ENCODE measurements at regions of chr12 and their contacts with region 1.

Region 1: GRCh38 chr12:51823875-51824565 is 24.5 kb downstream of the FIGNL2 start:
- DNase-seq: no peak
- H3K4me3 Mint-ChIP-seq: no peak overlapping the region
- H3K27ac Mint-ChIP-seq: no peak overlapping the region
- H3K4me1 Mint-ChIP-seq: peaks cover 22% of the 10 kb centered on the region
- H3K27me3 Mint-ChIP-seq: peaks cover 33% of the 10 kb centered on the region

Region 2: DNA sequence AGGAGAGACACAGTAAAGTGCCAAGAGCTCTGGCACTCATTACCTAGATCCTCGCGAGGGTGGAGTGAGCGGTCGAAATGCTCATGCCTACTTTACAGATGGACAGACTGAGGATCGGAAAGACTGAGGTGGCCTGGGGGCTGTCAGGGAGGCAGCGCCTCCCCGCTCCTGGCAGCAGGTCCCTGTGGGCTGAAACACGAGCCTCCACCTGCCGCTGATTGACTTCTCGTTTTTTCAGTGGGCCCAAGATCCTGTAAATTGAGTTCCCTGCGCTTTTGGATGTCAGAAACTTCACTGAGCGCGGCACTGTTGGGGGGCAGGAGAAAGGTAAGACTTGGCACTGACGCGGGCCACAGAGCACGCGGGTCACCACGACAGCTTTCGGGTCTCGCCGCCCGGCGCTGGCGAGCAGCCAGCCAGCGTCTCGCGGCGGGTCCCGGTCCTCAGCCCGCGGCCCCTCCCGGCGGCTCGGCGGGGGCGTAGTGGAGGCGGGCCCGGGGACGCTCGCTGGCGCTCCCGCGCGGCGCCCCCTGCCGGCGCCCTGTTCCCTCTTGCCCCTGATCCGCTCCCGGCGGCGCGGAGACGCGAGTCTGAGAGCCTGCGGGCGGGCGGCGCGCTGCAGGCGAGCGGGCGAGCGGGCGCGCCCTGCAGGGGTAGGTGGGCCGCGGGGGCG is 233.5 kb before region 1 on chr12:
- intact Hi-C with region 1: loop called (anchors 1 kb)
- DNase-seq: peak; percentile 72
- H3K4me3 Mint-ChIP-seq: peak overlapping the region; percentile 88
- H3K27ac Mint-ChIP-seq: peak overlapping the region; percentile 77
- H3K4me1 Mint-ChIP-seq: peaks cover 10% of the 10 kb centered on the region
- H3K27me3 Mint-ChIP-seq: peaks cover 61% of the 10 kb centered on the region

Region 3: GRCh38 chr12:51871126-51871525 is 47.1 kb after region 1 on chr12:
- intact Hi-C with region 1: loop called (anchors 2 kb)
- DNase-seq: no peak
- H3K4me3 Mint-ChIP-seq: no peak overlapping the region
- H3K27ac Mint-ChIP-seq: no peak overlapping the region
- H3K4me1 Mint-ChIP-seq: peaks cover 12% of the 10 kb centered on the region
- H3K27me3 Mint-ChIP-seq: peaks cover 55% of the 10 kb centered on the region

Measured in activated T-helper 1 cell treated with anti-CD3 and anti-CD28 coated beads, Interleukin-12 subunit alpha, Interleukin-12 subunit beta, Interleukin-2, Interleukin-4 antibody, amounts not matched to agents 30 ng/mL and 10 ng/mL and 1 ng/mL, durations not matched to agents 14 hours and 24 hours and 36 hours (primary cell).